GM13977 (cell line): ENCODE measurements at regions of chr11 and their contacts with region 1.

Region 1: DNA sequence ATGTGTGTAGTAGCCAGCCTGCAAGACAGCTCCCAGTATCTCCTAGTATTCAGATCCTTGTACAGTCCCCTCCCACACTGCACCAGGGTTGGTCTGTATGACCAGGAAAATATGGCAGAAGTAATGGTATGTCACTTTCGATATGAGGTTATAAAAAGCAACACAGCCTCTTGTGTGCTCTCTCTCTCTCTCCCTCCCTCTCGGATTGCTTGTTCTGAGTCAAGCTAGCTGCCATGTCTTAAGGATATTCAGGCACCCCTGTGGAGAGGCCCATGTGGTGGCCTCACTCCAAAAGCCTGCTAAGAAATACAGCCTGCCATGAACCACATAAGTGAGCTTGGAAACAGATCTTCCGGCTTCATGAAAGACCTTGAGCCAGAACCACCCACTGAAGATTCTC is 25.4 kb downstream of the FXYD6 start:
- DNase-seq: no peak
- CTCF ChIP-seq: no peak

Region 2: GRCh38 chr11:118051611-118052461 is 200.7 kb after region 1 on chr11:
- in situ Hi-C with region 1: loop called (anchors 10 kb)
- DNase-seq: peak; percentile 38
- CTCF ChIP-seq: no peak